Activated B cell treated with CpG ODN at 0.5 μM for 24 hours (primary cell): ENCODE measurements at regions of chr5 and their contacts with region 1.

Region 1: DNA sequence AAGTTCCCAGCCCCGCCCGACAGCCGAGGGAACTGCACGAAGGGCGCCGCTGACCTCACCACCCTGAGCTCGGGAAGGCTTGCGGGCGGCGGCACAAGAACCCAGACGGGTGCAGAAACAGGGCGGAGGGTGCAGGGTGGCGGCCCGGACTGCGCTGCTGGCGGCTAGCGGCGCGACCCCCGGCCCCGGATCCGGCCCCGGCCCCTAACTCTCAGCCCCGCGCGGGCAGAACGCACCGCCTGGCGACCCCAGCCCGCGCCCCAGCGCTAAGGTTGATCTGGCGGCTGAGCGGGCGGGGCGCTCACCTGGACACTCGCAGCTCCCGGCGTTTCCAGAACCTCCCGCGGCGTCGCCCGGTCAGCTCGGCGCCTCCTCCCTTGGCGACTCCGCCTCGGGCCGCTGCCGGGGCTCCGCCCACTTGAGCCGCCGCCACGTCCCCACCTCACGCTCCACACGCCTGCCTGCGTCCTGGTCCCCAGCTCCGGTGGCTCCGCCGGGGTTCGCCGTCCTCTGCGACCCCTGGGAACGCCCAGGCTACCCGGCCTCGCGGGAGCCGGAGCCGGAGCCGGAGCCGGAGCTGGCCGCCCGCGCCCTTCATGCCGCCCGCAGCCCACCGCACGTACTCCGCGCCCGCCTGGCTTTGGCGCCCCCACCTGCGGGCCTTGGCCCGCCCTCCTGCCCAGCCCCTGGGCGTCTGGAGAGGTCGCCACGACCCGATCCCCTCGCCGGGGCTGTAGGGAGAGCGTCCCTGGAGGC is at the start of gene P4HA2:
- DNase-seq: peak; percentile 60
- ATAC-seq: peak; percentile 83
- H3K4me3 Mint-ChIP-seq: peak within 1 kb of the TSS; percentile 65
- H3K27ac Mint-ChIP-seq: no peak within 1 kb of the TSS
- H3K4me1 Mint-ChIP-seq: peaks cover 31% of the 10 kb centered on the region
- H3K27me3 Mint-ChIP-seq: peaks cover 11% of the 10 kb centered on the region
- CTCF ChIP-seq: no peak
- total RNA-seq, gene P4HA2: 0.29 and 0.44 TPM in 2 replicates

Region 2: DNA sequence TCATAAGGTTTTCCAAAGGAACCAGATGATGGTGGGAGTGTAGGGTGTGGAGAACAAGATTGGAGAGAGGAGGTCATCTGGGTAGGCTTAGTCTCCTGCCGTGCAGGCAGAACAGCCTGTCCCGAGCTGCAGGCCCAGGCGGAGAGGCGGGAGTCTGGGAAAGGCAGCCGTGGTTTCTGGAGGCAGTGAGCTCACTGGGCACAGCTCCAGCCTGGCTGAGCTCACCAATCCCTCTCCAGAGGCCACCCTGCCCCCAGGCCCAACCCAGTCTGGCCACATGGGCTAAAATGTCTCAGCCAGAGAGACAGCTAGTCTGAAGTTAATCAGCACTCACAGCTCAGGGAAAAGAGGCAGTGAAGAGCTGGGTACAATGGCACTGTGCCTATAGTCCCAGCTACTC is 12.3 kb before region 1 on chr5:
- CTCF ChIA-PET with region 1: no interaction called
- POLR2A ChIA-PET with region 1: interaction called, 19 read pairs
- intact Hi-C with region 1: no loop called
- DNase-seq: no peak
- ATAC-seq: no peak
- H3K4me3 Mint-ChIP-seq: no peak overlapping the region
- H3K27ac Mint-ChIP-seq: no peak overlapping the region
- H3K4me1 Mint-ChIP-seq: no peaks in the 10 kb centered on the region
- H3K27me3 Mint-ChIP-seq: no peaks in the 10 kb centered on the region
- CTCF ChIP-seq: no peak

Region 3: GRCh38 chr5:132238169-132238744 is 10.6 kb after region 1 on chr5:
- CTCF ChIA-PET with region 1: interaction called, 21 read pairs
- POLR2A ChIA-PET with region 1: interaction called, 4 read pairs
- intact Hi-C with region 1: no loop called
- DNase-seq: peak; percentile 59
- ATAC-seq: peak; percentile 90
- H3K4me3 Mint-ChIP-seq: no peak overlapping the region
- H3K27ac Mint-ChIP-seq: no peak overlapping the region
- H3K4me1 Mint-ChIP-seq: no peaks in the 10 kb centered on the region
- H3K27me3 Mint-ChIP-seq: peaks cover 4% of the 10 kb centered on the region
- CTCF ChIP-seq: no peak

Region 4: GRCh38 chr5:132877938-132878337 is 650.3 kb after region 1 on chr5:
- CTCF ChIA-PET with region 1: no interaction called
- POLR2A ChIA-PET with region 1: no interaction called
- intact Hi-C with region 1: no loop called
- DNase-seq: no peak
- ATAC-seq: no peak
- H3K4me3 Mint-ChIP-seq: no peak overlapping the region
- H3K27ac Mint-ChIP-seq: no peak overlapping the region
- H3K4me1 Mint-ChIP-seq: no peaks in the 10 kb centered on the region
- H3K27me3 Mint-ChIP-seq: no peaks in the 10 kb centered on the region
- CTCF ChIP-seq: no peak